PC-3 (cell line): ENCODE measurements at regions of chr3 and their contacts with region 1.

Region 1: GRCh38 chr3:167497903-167498302 is 24.1 kb upstream of the SERPINI2 start:
- DNase-seq: no peak
- ATAC-seq: no peak
- H3K4me3 ChIP-seq: no peak overlapping the region
- H3K27ac ChIP-seq: no peak overlapping the region
- H3K4me1 ChIP-seq: no peaks in the 10 kb centered on the region
- H3K27me3 ChIP-seq: 0 out of 2 replicates have a peak, but pooled peaks cover 5% of the 10 kb centered on the region
- CTCF ChIP-seq: no peak

Region 2: DNA sequence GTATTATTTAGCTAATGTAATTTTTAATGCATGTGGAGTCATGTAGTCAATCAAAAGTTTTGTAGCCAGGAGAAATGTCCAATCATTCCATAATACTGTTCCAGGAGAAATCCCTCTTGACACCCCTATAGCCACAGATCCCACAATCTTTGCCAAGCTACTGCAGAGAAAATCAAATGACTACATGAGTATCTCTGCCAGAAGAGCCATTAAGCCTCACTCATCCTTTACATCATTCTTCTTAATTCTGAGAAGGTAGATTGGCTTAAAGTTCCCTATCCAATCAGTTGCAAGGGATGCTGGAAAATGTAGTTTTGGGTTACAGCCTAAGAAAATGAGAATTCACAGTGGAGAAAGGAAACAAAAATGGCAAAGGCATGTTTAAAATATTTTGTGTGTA is 619.9 kb before region 1 on chr3:
- CTCF ChIA-PET with region 1: no interaction called
- POLR2A ChIA-PET with region 1: no interaction called
- intact Hi-C with region 1: no loop called
- DNase-seq: no peak
- ATAC-seq: no peak
- H3K4me3 ChIP-seq: no peak overlapping the region
- H3K27ac ChIP-seq: no peak overlapping the region
- H3K4me1 ChIP-seq: no peaks in the 10 kb centered on the region
- H3K27me3 ChIP-seq: no peaks in the 10 kb centered on the region
- CTCF ChIP-seq: no peak

Region 3: DNA sequence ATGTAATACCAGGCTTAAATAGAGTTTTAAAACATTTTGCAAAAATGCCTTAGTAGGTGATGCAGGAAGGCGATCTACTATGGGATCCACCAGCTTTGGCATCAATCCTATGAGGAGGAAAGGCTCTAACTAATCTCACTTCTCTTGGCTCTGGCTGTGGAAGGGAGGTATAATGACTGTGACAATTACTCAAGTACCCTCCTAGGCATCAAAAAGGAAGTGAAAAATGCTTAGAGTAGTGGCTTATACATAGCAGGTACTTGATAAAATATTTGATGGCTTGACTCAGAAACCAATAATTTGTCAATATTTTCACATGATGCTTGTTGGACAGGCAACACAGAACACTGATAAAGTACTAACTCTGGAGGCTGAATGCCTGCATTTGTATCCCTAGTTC is 10.1 kb after region 1 on chr3:
- CTCF ChIA-PET with region 1: no interaction called
- POLR2A ChIA-PET with region 1: interaction called, 15 read pairs
- intact Hi-C with region 1: no loop called
- DNase-seq: no peak
- ATAC-seq: no peak
- H3K4me3 ChIP-seq: no peak overlapping the region
- H3K27ac ChIP-seq: no peak overlapping the region
- H3K4me1 ChIP-seq: no peaks in the 10 kb centered on the region
- H3K27me3 ChIP-seq: no peaks in the 10 kb centered on the region
- CTCF ChIP-seq: no peak